PC-9 (cell line): ENCODE measurements at regions of chr16 and their contacts with region 1.

Region 1: DNA sequence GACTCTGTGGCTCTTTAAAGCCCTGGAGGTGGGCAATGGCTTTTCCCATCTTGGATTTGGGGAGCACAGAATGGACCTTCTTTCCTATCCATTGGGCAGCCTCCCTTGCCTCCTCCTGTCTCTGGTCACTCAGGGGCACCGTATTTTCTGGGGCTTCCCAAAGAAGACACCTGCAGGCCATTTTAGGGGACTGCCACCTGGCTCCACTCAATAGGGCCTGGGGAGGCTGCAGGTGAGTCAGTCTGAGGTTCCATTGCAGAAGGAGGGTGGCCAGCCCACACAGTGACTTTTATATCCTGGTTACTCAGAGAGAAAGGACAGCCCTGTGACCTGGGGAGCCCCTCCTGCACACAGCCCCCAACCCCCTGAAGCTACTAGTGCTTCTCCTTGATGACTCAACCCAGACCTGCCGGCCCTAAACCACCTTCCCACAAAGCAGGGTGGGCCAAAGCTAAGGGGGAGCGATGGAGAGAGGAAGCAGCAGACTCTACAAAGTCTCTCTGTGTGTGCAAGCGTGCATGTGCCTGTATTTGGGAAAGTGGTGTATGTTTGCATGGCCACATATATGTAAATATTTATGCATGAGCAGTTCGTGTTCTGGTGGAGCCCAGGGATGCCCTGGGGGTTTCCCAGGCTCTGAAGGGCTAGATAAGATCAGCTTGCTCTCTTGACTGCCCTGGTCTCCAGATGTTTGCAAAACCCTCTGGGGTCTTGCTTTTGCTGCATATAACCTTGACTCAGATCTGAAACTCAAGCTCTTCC is 5.0 kb downstream of the CX3CL1 start:
- DNase-seq: peak; percentile 72 to 85
- H3K4me3 ChIP-seq: peak overlapping the region; percentile 11; the same call in 1 of the 2 replicates
- H3K27ac ChIP-seq: peak overlapping the region; percentile 87
- H3K4me1 ChIP-seq: peaks cover 30% of the 10 kb centered on the region
- H3K27me3 ChIP-seq: no peaks in the 10 kb centered on the region
- CTCF ChIP-seq: peak; percentile 65

Region 2: GRCh38 chr16:56551796-56552738 is 825.2 kb before region 1 on chr16:
- CTCF ChIA-PET with region 1: no interaction called
- POLR2A ChIA-PET with region 1: no interaction called
- intact Hi-C with region 1: no loop called
- DNase-seq: no peak
- H3K4me3 ChIP-seq: no peak overlapping the region
- H3K27ac ChIP-seq: no peak overlapping the region
- H3K4me1 ChIP-seq: no peaks in the 10 kb centered on the region
- H3K27me3 ChIP-seq: peaks cover 18% of the 10 kb centered on the region; the same call in 1 of the 2 replicates
- CTCF ChIP-seq: no peak

Region 3: GRCh38 chr16:57256642-57257395 is 120.4 kb before region 1 on chr16:
- CTCF ChIA-PET with region 1: no interaction called
- POLR2A ChIA-PET with region 1: no interaction called
- intact Hi-C with region 1: no loop called
- DNase-seq: no peak
- H3K4me3 ChIP-seq: no peak overlapping the region
- H3K27ac ChIP-seq: no peak overlapping the region
- H3K4me1 ChIP-seq: peaks cover 40% of the 10 kb centered on the region
- H3K27me3 ChIP-seq: no peaks in the 10 kb centered on the region
- CTCF ChIP-seq: no peak

Region 4: GRCh38 chr16:57277586-57277985 is 99.7 kb before region 1 on chr16:
- CTCF ChIA-PET with region 1: interaction called, 10 read pairs
- POLR2A ChIA-PET with region 1: no interaction called
- intact Hi-C with region 1: no loop called
- DNase-seq: peak; percentile 92 to 97
- H3K4me3 ChIP-seq: no peak overlapping the region
- H3K27ac ChIP-seq: peak overlapping the region; percentile 39; the same call in 1 of the 2 replicates
- H3K4me1 ChIP-seq: peaks cover 49% of the 10 kb centered on the region
- H3K27me3 ChIP-seq: no peaks in the 10 kb centered on the region
- CTCF ChIP-seq: no peak

Region 5: GRCh38 chr16:57341441-57342303 is 35.6 kb before region 1 on chr16:
- CTCF ChIA-PET with region 1: no interaction called
- POLR2A ChIA-PET with region 1: no interaction called
- intact Hi-C with region 1: loop called (anchors 1 kb)
- DNase-seq: peak; percentile 89 to 100
- H3K4me3 ChIP-seq: peak overlapping the region; percentile 0; the same call in 1 of the 2 replicates
- H3K27ac ChIP-seq: peak overlapping the region; percentile 91
- H3K4me1 ChIP-seq: peaks cover 38% of the 10 kb centered on the region
- H3K27me3 ChIP-seq: no peaks in the 10 kb centered on the region
- CTCF ChIP-seq: no peak

Region 6: GRCh38 chr16:57388359-57389086 is 11.3 kb after region 1 on chr16:
- CTCF ChIA-PET with region 1: no interaction called
- POLR2A ChIA-PET with region 1: no interaction called
- intact Hi-C with region 1: loop called (anchors 1 kb)
- DNase-seq: peak; percentile 37 to 79
- H3K4me3 ChIP-seq: no peak overlapping the region
- H3K27ac ChIP-seq: peak overlapping the region; percentile 50; the same call in 1 of the 2 replicates
- H3K4me1 ChIP-seq: peaks cover 49% of the 10 kb centered on the region
- H3K27me3 ChIP-seq: no peaks in the 10 kb centered on the region
- CTCF ChIP-seq: no peak

Region 7: GRCh38 chr16:57416122-57416509 is 38.9 kb after region 1 on chr16:
- CTCF ChIA-PET with region 1: interaction called, 7 read pairs
- POLR2A ChIA-PET with region 1: no interaction called
- intact Hi-C with region 1: loop called (anchors 2 kb)
- DNase-seq: no peak
- H3K4me3 ChIP-seq: no peak overlapping the region
- H3K27ac ChIP-seq: no peak overlapping the region
- H3K4me1 ChIP-seq: peaks cover 24% of the 10 kb centered on the region
- H3K27me3 ChIP-seq: no peaks in the 10 kb centered on the region; the same call in 1 of the 2 replicates
- CTCF ChIP-seq: no peak